Activated B cell treated with CpG ODN at 0.5 μM for 24 hours (primary cell): ENCODE measurements at regions of chr17 and their contacts with region 1.

Region 1: DNA sequence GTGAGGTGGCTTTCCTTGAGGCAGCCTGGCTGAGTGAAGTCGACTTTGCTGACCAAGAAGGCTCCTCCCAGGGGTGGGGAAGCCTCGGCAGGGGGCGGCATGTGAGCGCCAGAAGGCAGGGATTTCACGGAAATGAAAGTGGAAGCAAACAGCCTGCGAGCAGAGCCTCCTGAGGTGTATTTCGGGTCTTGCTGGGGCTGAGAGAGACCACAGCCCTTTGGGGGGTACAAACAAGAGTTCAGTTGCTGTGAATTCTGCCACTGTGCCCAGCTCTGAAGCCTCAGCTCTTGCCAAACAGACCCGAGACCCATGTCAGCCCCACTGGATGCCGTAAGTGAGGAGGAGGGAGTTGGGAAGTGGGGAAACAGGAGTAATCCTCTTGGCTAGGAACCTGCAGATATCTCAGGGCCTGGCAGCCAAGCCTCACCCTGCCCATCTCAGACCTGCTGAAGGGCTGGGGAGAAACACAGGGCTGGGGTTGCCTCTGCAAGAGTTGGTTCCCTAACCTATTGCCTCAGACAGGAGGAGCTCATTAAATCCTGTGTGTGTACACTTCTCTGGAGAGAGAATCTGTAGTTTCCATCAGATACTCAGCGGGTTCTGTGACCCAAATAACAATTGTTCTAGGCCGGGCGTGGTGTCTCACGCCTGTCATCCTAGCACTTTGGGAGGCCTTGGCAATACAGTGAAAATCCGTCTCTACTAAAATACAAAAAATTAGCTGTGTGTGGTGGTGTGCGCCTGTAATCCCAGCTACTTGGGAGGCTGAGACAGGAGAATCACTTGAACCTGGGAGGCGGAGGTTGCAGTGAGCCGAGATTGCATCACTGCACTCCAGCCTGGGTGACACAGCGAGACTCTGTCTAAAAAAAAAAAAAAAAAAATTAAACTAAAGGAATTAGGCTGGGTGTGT is at the start of gene IFI35:
- DNase-seq: peak; percentile 75
- ATAC-seq: peak; percentile 99
- H3K4me3 Mint-ChIP-seq: peak within 1 kb of the TSS; percentile 99
- H3K27ac Mint-ChIP-seq: peak within 1 kb of the TSS; percentile 99
- H3K4me1 Mint-ChIP-seq: peaks cover 16% of the 10 kb centered on the region
- H3K27me3 Mint-ChIP-seq: no peaks in the 10 kb centered on the region
- CTCF ChIP-seq: no peak
- total RNA-seq, gene IFI35: 41.9 and 50.5 TPM in 2 replicates

Region 2: GRCh38 chr17:42980398-42981397 is 26.2 kb before region 1 on chr17 and contains the start of gene RUNDC1:
- CTCF ChIA-PET with region 1: no interaction called
- POLR2A ChIA-PET with region 1: interaction called, 11 read pairs
- intact Hi-C with region 1: no loop called
- DNase-seq: peak; percentile 94
- ATAC-seq: peak; percentile 76
- H3K4me3 Mint-ChIP-seq: peak within 1 kb of the TSS; percentile 99
- H3K27ac Mint-ChIP-seq: peak within 1 kb of the TSS; percentile 98
- H3K4me1 Mint-ChIP-seq: peaks cover 53% of the 10 kb centered on the region
- H3K27me3 Mint-ChIP-seq: no peaks in the 10 kb centered on the region
- CTCF ChIP-seq: no peak
- total RNA-seq, gene RUNDC1: 28.3 and 30.9 TPM in 2 replicates

Region 3: DNA sequence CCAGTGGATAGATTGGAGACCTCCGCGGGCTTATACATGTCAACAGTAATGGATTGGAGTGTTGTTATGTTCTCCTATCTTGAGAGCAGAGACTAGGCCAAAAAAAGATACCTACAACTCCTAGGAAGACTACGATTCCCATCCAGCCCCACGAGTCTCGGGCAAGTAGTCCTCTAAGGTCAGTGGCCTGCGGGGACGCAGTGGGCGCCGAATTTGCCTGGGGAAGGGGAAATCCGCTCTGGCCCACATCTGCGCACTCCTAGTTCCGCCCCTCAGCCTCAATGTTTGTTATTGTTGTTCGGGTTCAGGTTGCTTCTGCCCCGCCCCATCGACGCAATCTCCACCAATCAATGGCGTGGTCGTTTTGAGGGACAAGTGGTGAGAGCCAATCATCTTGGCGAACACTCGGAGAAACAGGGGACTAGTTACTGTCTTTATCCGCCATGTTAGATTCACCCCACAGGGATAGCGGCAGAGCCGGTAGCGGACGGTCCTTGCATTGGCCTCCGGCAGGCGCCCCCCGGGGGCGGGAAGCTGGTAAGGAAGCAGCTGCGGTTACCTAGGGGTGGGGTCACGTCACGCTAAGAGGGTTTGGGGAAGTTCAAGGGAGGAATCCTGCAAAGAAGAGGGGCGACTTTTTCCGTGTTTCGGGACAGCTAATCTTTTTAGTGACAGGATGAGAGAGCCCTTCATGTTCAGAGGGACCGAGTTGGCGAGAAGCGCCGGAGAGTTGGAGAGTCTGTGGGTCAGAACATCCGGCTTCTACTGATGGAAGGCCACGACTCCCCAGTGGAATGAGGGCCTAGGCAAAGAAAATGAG is 164.1 kb after region 1 on chr17 and contains the start of gene NBR1:
- CTCF ChIA-PET with region 1: interaction called, 3 read pairs
- POLR2A ChIA-PET with region 1: interaction called, 7 read pairs
- intact Hi-C with region 1: loop called (anchors 1 kb)
- DNase-seq: peak; percentile 86
- ATAC-seq: peak; percentile 74
- H3K4me3 Mint-ChIP-seq: no peak within 1 kb of the TSS
- H3K27ac Mint-ChIP-seq: no peak within 1 kb of the TSS
- H3K4me1 Mint-ChIP-seq: peaks cover 13% of the 10 kb centered on the region
- H3K27me3 Mint-ChIP-seq: no peaks in the 10 kb centered on the region
- CTCF ChIP-seq: no peak
- total RNA-seq, gene NBR1: 42.2 and 44.8 TPM in 2 replicates